ENCODE measurements at regions of chr5 and their contacts with region 1.

Region 1: GRCh38 chr5:10353241-10354047 is at the start of gene MARCHF6:
- DNase-seq: peak; percentile 91 to 98
- ATAC-seq: peak; percentile 86 to 96 (median 90)
- H3K4me3 ChIP-seq: peak within 1 kb of the TSS; percentile 89
- H3K4me3 Mint-ChIP-seq: peak within 1 kb of the TSS; percentile 100
- H3K27ac ChIP-seq: peak within 1 kb of the TSS; percentile 96
- H3K27ac Mint-ChIP-seq: peak within 1 kb of the TSS; percentile 97 to 98
- H3K4me1 ChIP-seq: peaks cover 11% of the 10 kb centered on the region
- H3K4me1 Mint-ChIP-seq: peaks cover 31 to 41% of the 10 kb centered on the region in 2 donors
- H3K27me3 ChIP-seq: no peaks in the 10 kb centered on the region
- H3K27me3 Mint-ChIP-seq: no peaks in the 10 kb centered on the region
- CTCF ChIP-seq: no peak
- total RNA-seq, gene MARCHF6: 160 to 173 (median 164) TPM

Region 2: DNA sequence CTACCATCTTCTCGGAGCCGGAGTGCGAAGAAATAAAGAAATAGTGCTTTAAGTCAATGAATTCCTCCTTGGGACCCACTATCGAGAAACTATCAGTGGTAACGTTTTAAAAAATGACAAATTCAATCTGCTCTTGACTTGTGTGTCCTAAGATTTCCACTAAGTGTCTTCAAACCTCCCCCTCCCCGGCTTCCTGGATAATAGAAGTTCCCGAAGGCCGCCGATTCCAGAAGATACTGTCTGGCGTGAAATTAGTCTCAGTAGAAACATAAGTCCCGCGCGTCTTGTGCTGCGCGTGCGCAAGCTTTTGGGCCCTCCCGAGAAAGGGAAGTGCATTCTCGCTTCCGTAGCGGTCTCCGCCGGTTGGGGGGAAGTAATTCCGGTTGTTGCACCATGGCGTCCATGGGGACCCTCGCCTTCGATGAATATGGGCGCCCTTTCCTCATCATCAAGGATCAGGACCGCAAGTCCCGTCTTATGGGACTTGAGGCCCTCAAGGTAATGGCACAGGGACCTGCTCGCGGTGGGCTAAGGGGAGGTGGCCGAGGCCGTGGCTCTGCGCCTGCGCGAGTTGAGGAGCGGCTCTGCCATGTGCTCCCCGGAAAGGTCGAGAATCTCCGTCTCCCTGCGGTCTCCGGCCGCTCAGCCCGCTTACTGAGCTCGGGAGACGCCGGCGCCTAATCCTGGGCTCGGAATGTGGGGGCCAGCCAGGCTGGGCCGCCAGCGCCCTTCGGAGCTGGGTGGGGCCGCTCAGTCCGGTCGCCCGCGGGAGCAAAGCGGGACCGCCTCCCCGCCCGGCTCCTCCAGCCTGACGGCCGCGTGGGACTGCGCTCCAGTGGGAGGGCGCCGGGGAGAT is 103.3 kb before region 1 on chr5 and contains the start of gene CCT5:
- intact Hi-C with region 1: loop called (anchors 1 kb)
- DNase-seq: peak; percentile 88 to 98
- ATAC-seq: peak; percentile 85 to 93 (median 85)
- H3K4me3 ChIP-seq: peak within 1 kb of the TSS; percentile 90
- H3K4me3 Mint-ChIP-seq: peak within 1 kb of the TSS; percentile 97
- H3K27ac ChIP-seq: peak within 1 kb of the TSS; percentile 95
- H3K27ac Mint-ChIP-seq: peak within 1 kb of the TSS; percentile 99
- H3K4me1 ChIP-seq: peaks cover 24% of the 10 kb centered on the region
- H3K4me1 Mint-ChIP-seq: peaks cover 45 to 53% of the 10 kb centered on the region in 2 donors
- H3K27me3 ChIP-seq: no peaks in the 10 kb centered on the region
- H3K27me3 Mint-ChIP-seq: no peaks in the 10 kb centered on the region
- CTCF ChIP-seq: no peak
- total RNA-seq, gene CCT5: 62.2 to 88.0 (median 73.5) TPM

Region 3: GRCh38 chr5:10307206-10308148 is 46.0 kb before region 1 on chr5 and contains the start of gene CMBL:
- intact Hi-C with region 1: no loop called
- DNase-seq: peak; percentile 21 to 35
- ATAC-seq: peak; percentile 71 to 89 (median 85)
- H3K4me3 ChIP-seq: peak within 1 kb of the TSS; percentile 37
- H3K4me3 Mint-ChIP-seq: peak within 1 kb of the TSS; percentile 95
- H3K27ac ChIP-seq: no peak within 1 kb of the TSS
- H3K27ac Mint-ChIP-seq: peak within 1 kb of the TSS in 1 of 2 donors; percentile 85
- H3K4me1 ChIP-seq: no peaks in the 10 kb centered on the region
- H3K4me1 Mint-ChIP-seq: peaks cover 8 to 14% of the 10 kb centered on the region in 2 donors
- H3K27me3 ChIP-seq: peaks cover 4% of the 10 kb centered on the region
- H3K27me3 Mint-ChIP-seq: peaks cover 14 to 15% of the 10 kb centered on the region in 2 donors
- CTCF ChIP-seq: no peak
- total RNA-seq, gene CMBL: 0.45 to 1.0 TPM in 2 of 3 donors, not detected in the other

Region 4: GRCh38 chr5:10333154-10334006 is 20.1 kb before region 1 on chr5:
- intact Hi-C with region 1: no loop called
- DNase-seq: peak; percentile 16 to 18
- ATAC-seq: peak; percentile 41 to 72 (median 67)
- H3K4me3 ChIP-seq: peak overlapping the region; percentile 39
- H3K4me3 Mint-ChIP-seq: peak overlapping the region; percentile 91
- H3K27ac ChIP-seq: no peak overlapping the region
- H3K27ac Mint-ChIP-seq: peak overlapping the region in 1 of 2 donors; percentile 63
- H3K4me1 ChIP-seq: peaks cover 12% of the 10 kb centered on the region
- H3K4me1 Mint-ChIP-seq: peaks cover 9 to 10% of the 10 kb centered on the region in 2 donors
- H3K27me3 ChIP-seq: peaks cover 17% of the 10 kb centered on the region
- H3K27me3 Mint-ChIP-seq: peaks cover 36 to 43% of the 10 kb centered on the region in 2 donors
- CTCF ChIP-seq: no peak

Region 5: GRCh38 chr5:10374046-10375022 is 20.9 kb after region 1 on chr5:
- intact Hi-C with region 1: loop called (anchors 2 kb)
- DNase-seq: no peak
- ATAC-seq: peak in 1 of 3 donors; percentile 33
- H3K4me3 ChIP-seq: no peak overlapping the region
- H3K4me3 Mint-ChIP-seq: peak overlapping the region; percentile 60
- H3K27ac ChIP-seq: no peak overlapping the region
- H3K27ac Mint-ChIP-seq: peak overlapping the region; percentile 65 to 79
- H3K4me1 ChIP-seq: peaks cover 33% of the 10 kb centered on the region
- H3K4me1 Mint-ChIP-seq: peaks cover 74 to 77% of the 10 kb centered on the region in 2 donors
- H3K27me3 ChIP-seq: no peaks in the 10 kb centered on the region
- H3K27me3 Mint-ChIP-seq: no peaks in the 10 kb centered on the region
- CTCF ChIP-seq: no peak

Region 6: DNA sequence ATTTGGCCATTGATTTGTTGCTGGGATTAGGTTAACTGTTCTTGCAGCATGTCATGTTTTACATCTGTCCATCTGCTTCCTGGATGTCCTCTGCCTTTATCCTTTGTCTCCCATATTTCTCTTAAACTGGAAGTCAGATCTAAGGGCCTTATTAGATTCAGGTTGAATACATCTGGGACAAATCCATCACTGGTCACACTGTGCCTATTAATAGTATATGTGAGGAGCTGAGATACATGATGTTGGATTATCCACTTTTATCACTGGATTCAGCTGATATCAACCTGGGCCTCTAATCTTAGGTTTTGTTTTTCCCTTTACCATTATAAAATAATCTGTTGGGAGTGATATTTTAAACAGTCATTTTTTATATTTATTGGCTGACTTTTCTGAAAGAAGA is 46.4 kb after region 1 on chr5:
- intact Hi-C with region 1: loop called (anchors 5 kb)
- DNase-seq: no peak
- ATAC-seq: no peak
- H3K4me3 ChIP-seq: no peak overlapping the region
- H3K4me3 Mint-ChIP-seq: no peak overlapping the region
- H3K27ac ChIP-seq: no peak overlapping the region
- H3K27ac Mint-ChIP-seq: no peak overlapping the region
- H3K4me1 ChIP-seq: no peaks in the 10 kb centered on the region
- H3K4me1 Mint-ChIP-seq: peaks cover 0 to 8% of the 10 kb centered on the region in 2 donors
- H3K27me3 ChIP-seq: no peaks in the 10 kb centered on the region
- H3K27me3 Mint-ChIP-seq: no peaks in the 10 kb centered on the region
- CTCF ChIP-seq: no peak

Region 7: GRCh38 chr5:10441083-10441991 is 87.9 kb after region 1 on chr5 and contains the start of gene ROPN1L:
- intact Hi-C with region 1: loop called (anchors 5 kb)
- DNase-seq: peak; percentile 80 to 88
- ATAC-seq: peak; percentile 96 to 97 (median 96)
- H3K4me3 ChIP-seq: peak within 1 kb of the TSS; percentile 88
- H3K4me3 Mint-ChIP-seq: peak within 1 kb of the TSS; percentile 89
- H3K27ac ChIP-seq: peak within 1 kb of the TSS; percentile 42
- H3K27ac Mint-ChIP-seq: peak within 1 kb of the TSS; percentile 26 to 83
- H3K4me1 ChIP-seq: peaks cover 45% of the 10 kb centered on the region
- H3K4me1 Mint-ChIP-seq: peaks cover 38 to 40% of the 10 kb centered on the region in 2 donors
- H3K27me3 ChIP-seq: no peaks in the 10 kb centered on the region
- H3K27me3 Mint-ChIP-seq: no peaks in the 10 kb centered on the region
- CTCF ChIP-seq: no peak
- total RNA-seq, gene ROPN1L: 1.2 to 5.2 (median 4.3) TPM